SK-N-SH (cell line): ENCODE measurements at regions of chr3 and their contacts with region 1.

Region 1: DNA sequence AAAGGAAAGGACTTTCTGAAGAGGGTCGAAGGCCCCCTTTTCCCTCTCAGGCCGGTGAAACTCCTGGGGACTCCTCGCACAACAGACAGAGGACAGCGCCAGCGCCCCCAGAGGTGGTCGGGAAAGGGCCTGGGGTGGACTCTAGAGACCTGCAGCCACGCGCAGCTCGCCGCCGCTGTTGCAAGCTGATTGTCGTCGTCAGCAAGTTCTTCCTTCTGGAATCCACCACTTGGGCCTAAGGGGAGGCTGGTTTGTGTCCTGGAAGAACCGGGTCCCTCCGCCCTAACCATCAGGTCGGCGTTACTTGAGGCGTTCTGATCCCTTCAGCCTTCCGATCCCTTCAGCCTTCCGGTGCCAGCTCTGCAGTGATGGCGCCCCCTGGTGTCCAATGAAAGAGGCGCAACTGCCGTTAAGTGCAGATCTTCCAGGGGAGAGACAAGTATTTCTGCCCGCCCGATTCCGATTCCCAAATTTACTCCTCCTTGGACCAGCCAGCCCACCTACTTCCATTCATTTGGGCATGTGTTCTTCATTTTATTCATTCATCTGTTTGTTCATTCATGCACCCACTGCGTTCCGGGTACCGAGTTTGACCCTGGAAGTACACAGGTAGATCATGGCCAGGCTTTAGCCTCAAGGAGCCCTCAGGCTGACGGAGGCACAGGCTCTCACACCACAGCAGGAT is 77.2 kb upstream of the SLC6A11 start:
- DNase-seq: peak; percentile 81
- H3K4me3 ChIP-seq: peak overlapping the region; percentile 45 to 59; a peak in 3 of 4 replicates
- H3K27ac ChIP-seq: no peak overlapping the region
- H3K4me1 ChIP-seq: peaks cover 0 to 5% of the 10 kb centered on the region in 2 experiments; a peak in 1 of 4 replicates
- H3K27me3 ChIP-seq: no peaks in the 10 kb centered on the region
- CTCF ChIP-seq: peak; percentile 84
- EP300 ChIP-seq: no peak
- RAD21 ChIP-seq: peak; percentile 71

Region 2: DNA sequence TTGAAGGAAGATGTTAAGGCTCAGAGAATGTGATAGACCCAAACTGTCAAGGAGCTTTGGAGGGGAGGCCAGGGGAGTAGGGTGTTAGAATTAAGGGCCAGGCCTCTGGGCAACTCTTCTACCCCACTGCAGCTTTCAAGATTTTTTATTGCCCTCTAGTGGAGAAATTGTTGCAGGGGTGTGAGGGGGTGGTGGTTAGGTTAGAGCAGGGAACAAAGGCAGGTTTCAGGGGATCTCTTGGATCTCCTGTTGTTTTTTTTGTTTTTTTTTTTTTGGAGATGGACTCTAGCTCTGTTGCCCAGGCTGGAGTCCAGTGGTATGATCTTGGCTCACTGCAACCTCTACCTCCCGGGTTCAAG is 416.5 kb before region 1 on chr3:
- CTCF ChIA-PET with region 1: interaction called, 29 read pairs
- POLR2A ChIA-PET with region 1: no interaction called
- DNase-seq: no peak
- H3K4me3 ChIP-seq: no peak overlapping the region
- H3K27ac ChIP-seq: no peak overlapping the region
- H3K4me1 ChIP-seq: peaks cover 4 to 8% of the 10 kb centered on the region in 2 experiments; a peak in 3 of 4 replicates
- H3K27me3 ChIP-seq: peaks cover 20% of the 10 kb centered on the region; the same call in 1 of the 2 replicates
- CTCF ChIP-seq: peak; percentile 38; the same call in 1 of the 2 replicates
- EP300 ChIP-seq: no peak
- RAD21 ChIP-seq: no peak

Region 3: DNA sequence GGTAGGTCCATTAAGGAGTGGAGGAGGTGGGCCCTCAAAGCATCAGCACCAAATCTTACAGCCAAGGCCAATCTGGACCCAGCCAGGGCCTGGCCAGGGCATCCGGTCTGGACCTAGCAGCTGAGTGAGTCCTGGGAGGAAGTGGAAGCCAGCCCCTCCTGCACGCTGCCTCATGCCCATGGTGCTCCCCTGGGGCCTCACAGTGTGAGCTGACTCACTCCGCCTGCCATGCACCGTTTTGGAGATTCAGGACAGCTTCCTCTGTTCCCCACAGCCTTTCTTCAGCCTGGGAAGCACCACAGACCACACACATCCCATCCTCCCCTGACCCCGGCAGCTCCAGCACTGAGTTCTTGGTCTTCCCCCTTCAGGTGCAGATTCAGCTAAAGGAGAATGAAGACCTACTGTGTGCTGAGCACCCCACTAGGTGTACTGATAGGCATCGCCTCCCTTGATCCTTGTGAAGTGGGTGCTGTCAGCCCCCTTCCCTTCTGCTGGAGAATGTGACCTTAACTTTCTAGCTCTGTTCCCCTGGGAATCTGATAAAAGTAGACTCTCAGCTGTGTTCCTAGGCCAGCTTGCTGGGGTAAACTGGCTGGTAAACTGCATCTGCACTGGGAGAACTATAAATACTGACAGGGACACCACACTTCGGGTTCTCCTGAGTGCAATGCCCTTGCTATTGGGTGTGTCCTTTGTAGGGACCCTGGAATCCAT is 381.1 kb before region 1 on chr3:
- CTCF ChIA-PET with region 1: interaction called, 33 read pairs
- POLR2A ChIA-PET with region 1: no interaction called
- DNase-seq: no peak
- H3K4me3 ChIP-seq: no peak overlapping the region
- H3K27ac ChIP-seq: peak overlapping the region in 1 of 2 experiments; percentile 91; a peak in 2 of 4 replicates
- H3K4me1 ChIP-seq: peaks cover 8 to 47% of the 10 kb centered on the region in 2 experiments; a peak in 3 of 4 replicates
- H3K27me3 ChIP-seq: peaks cover 5% of the 10 kb centered on the region
- CTCF ChIP-seq: no peak
- EP300 ChIP-seq: no peak
- RAD21 ChIP-seq: no peak

Region 4: DNA sequence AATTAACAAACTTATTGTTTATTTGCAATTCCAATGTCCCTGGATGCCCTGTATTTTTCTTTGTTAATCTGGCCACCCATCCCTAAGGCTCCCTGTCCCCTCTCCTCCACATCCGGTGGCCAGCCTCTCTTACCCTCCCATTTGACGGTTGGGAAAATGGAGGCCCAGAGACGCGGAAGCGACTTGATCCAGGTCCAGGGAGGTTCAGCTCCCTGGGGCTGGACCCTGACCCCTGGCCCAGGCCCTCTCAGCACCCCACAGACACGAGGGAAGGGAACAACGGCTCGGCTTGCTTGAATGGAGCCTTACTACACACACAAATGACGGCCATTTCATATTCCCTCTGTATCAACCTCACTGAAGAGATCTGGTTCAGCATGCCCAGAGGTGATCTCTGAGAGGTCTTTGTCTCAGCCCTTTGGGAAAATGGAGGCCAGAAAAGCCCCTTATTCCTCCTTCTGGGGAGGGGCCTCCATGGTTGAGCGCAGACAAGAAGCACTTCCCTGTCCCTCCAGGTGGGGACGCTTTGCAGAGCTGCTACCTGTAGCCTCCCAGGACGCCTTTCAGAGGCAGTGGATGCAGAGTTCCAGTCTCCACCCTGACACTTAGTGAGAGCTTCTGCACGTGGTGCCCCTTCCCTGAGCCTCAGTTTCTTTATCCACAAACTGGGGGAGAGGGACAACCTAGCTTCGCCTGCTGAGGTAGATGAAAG is 315.5 kb before region 1 on chr3:
- CTCF ChIA-PET with region 1: interaction called, 133 read pairs
- POLR2A ChIA-PET with region 1: no interaction called
- DNase-seq: no peak
- H3K4me3 ChIP-seq: no peak overlapping the region
- H3K27ac ChIP-seq: no peak overlapping the region
- H3K4me1 ChIP-seq: no peaks in the 10 kb centered on the region
- H3K27me3 ChIP-seq: no peaks in the 10 kb centered on the region; the same call in 1 of the 2 replicates
- CTCF ChIP-seq: no peak
- EP300 ChIP-seq: no peak
- RAD21 ChIP-seq: no peak

Region 5: DNA sequence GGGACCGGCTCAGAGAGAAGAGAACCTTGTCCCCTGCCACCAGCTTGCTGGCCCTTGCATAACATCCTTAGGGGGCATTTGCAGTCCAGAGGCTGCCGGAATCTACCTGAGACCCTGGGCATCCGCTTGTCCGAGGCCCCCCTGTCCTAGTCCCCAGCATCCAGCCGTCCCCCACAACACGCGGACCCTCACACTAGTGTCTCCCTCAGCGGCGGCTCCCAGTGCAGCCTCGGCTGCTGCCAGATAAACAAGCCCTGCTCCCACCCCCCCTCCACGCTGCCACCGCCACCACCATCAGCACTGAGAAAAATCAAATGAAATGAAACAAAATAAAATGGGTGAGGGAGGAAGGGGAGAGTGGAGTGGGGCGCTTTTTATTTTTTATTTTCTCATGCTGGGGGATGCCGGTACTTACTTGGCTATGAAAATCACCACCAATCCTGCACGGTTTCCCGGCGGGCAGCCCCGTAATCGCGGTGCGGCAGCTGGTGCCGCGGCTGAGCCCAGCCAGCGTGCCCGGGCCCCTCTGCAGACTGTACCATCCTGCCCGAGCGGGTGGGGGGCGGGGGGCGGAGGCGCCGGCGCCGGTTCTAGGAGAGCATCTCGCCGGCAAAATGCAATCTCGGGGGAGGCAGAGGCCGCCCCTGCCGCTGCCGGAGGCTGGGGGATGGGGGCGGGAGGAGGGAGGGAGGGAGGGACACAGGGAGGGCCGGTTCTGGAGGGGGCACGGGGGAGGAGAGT is 233.6 kb before region 1 on chr3 and contains the start of gene ATP2B2:
- CTCF ChIA-PET with region 1: interaction called, 16 read pairs
- POLR2A ChIA-PET with region 1: no interaction called
- DNase-seq: peak; percentile 95
- H3K4me3 ChIP-seq: peak within 1 kb of the TSS; percentile 41 to 43; a peak in 3 of 4 replicates
- H3K27ac ChIP-seq: peak within 1 kb of the TSS in 1 of 2 experiments; percentile 20; a peak in 2 of 4 replicates
- H3K4me1 ChIP-seq: peaks cover 0 to 14% of the 10 kb centered on the region in 2 experiments; a peak in 1 of 4 replicates
- H3K27me3 ChIP-seq: 0 out of 2 replicates have a peak, but pooled peaks cover 8% of the 10 kb centered on the region
- CTCF ChIP-seq: no peak
- EP300 ChIP-seq: no peak
- RAD21 ChIP-seq: no peak
- polyA plus RNA-seq, gene ATP2B2: 0.05 and 0.15 TPM in 2 replicates

Region 6: GRCh38 chr3:10688126-10688525 is 50.7 kb before region 1 on chr3:
- CTCF ChIA-PET with region 1: interaction called, 10 read pairs
- POLR2A ChIA-PET with region 1: no interaction called
- DNase-seq: no peak
- H3K4me3 ChIP-seq: no peak overlapping the region
- H3K27ac ChIP-seq: no peak overlapping the region
- H3K4me1 ChIP-seq: no peaks in the 10 kb centered on the region
- H3K27me3 ChIP-seq: no peaks in the 10 kb centered on the region
- CTCF ChIP-seq: no peak
- EP300 ChIP-seq: no peak
- RAD21 ChIP-seq: no peak

Region 7: DNA sequence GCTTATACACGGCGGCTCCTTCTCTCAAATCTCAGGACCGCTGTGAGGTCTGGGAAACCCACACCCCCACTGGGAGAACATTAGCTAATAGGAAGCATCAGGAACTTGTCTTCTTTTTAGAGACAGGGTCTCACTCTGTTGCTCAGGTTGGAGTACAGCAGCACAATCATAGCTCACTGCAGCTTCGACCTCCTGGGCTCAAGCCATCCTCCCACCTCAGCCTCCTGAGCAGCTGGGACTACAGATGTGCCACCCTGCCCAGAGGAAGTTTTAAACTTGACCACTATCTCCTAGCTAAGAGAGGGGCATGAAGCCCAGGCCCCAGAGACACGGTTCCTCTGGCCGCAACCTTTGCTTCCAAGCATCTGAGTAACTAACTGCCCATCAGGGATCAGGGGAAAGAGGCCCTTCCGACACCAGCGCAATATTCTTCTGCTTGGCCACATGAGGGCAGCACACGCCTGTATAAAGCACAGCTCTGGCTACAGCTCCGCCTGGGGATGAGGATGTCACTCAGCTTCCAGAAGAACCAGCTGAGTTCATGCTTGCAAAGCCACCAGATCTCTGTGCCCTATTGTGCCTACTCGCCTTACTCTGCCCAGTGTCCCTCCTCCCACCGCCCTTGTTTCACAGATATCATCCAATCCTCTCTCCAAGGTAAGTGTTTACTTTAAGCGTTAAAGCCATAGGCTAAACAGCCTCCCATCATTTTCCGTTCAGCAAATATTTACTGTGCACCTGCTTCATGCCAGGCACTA is 19.7 kb after region 1 on chr3:
- CTCF ChIA-PET with region 1: interaction called, 31 read pairs
- POLR2A ChIA-PET with region 1: no interaction called
- DNase-seq: peak; percentile 86
- H3K4me3 ChIP-seq: no peak overlapping the region
- H3K27ac ChIP-seq: no peak overlapping the region
- H3K4me1 ChIP-seq: no peaks in the 10 kb centered on the region; a peak in 1 of 4 replicates
- H3K27me3 ChIP-seq: no peaks in the 10 kb centered on the region
- CTCF ChIP-seq: peak; percentile 67
- EP300 ChIP-seq: no peak
- RAD21 ChIP-seq: peak; percentile 94

Region 8: GRCh38 chr3:11037241-11037873 is 298.5 kb after region 1 on chr3:
- CTCF ChIA-PET with region 1: no interaction called
- POLR2A ChIA-PET with region 1: no interaction called
- DNase-seq: no peak
- H3K4me3 ChIP-seq: no peak overlapping the region
- H3K27ac ChIP-seq: no peak overlapping the region
- H3K4me1 ChIP-seq: no peaks in the 10 kb centered on the region
- H3K27me3 ChIP-seq: peaks cover 11% of the 10 kb centered on the region; the same call in 1 of the 2 replicates
- CTCF ChIP-seq: no peak
- EP300 ChIP-seq: no peak
- RAD21 ChIP-seq: no peak